Right lobe of liver (tissue), 6 donors: ENCODE measurements at regions of chr7 and their contacts with region 1.

Region 1: DNA sequence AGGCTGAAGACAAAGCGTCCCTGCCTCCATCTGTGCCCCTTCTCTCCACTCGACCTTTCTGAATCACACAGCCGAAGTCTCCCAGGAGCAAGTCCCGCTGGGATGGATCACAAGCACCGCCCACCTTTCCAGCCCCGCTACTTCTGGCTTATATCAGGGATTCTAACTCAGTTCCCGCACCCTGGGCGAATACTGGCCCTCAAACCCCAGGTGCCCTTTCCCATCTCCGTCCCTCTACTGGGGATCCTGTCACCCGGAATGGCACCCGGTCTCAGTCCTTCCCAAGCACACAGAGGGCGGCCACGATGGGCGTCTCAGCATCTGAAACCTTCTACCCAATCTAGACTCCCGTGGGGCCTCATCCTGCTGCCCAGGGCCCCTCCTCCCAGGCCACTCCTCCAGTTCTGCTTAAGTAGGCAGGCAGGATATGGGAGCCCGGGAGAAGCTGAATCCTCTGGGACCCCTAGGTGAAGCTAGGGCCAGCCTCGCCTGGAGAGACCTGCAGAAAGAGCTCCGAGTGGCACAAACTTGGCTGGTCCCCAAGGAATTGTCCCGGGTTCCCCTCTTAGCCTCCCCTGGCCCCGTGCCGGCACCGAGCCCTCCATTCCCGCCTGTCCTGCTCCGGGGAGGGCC is 768 bp downstream of the KCP start:
- DNase-seq: peak in 1 of 3 donors; percentile 22
- ATAC-seq: peak; percentile 6 to 28 (median 16)
- H3K4me3 ChIP-seq: peak overlapping the region in 1 of 3 donors; percentile 9
- H3K27ac ChIP-seq: no peak overlapping the region
- H3K4me1 ChIP-seq: peaks cover 0 to 4% (median 0%) of the 10 kb centered on the region in 4 donors
- H3K27me3 ChIP-seq: no peaks in the 10 kb centered on the region
- CTCF ChIP-seq: no peak
- POLR2A ChIP-seq: no peak

Region 2: DNA sequence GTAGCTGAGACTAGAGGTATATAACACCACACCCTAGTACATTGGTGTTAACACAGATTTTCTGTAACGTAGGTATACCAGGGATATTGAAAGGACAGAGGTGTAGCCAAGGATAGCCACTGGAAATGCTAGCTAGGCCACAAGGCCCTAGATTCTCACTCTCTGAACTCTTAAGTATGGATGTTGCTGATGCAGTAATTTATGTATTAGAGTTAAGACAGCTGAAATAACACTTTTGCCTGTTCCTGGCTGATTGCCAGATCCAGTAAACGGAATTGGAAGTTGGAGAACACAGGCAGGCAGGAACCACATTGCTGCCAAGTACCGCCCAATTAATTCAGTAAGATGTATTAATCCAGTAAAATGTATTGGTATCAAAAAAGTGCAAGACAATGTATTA is 168.7 kb before region 1 on chr7:
- intact Hi-C with region 1: no loop called
- DNase-seq: no peak
- ATAC-seq: no peak
- H3K4me3 ChIP-seq: no peak overlapping the region
- H3K27ac ChIP-seq: no peak overlapping the region
- H3K4me1 ChIP-seq: peaks cover 0 to 38% (median 7%) of the 10 kb centered on the region in 4 donors
- H3K27me3 ChIP-seq: no peaks in the 10 kb centered on the region
- CTCF ChIP-seq: no peak
- POLR2A ChIP-seq: no peak

Region 3: DNA sequence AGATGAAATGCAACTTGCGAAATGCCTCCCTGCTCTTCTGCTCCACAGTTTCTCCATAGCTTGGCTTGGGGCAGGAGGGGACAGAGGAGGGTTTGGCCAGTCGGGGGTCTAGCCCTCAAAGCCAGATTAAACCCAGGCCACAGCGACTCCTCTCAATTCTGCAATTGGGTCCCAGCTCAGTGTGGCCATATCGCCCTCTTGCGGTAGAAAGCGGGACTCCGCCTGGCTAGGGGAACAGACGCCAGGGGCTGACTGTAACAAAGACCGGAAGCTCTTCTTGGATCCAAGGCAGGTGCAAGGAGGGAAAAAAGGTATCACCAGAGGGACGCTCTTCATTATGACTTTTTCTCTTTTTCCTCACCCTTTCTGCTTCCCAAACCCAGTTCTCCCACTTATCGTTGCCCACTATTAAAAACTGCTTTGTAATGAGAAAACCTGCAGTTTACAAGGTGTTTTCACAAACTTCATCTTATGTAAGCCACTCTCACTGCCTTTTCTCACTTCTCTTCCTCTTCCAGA is 181.8 kb after region 1 on chr7:
- intact Hi-C with region 1: loop called in 1 of 2 experiments (anchors 5 kb)
- DNase-seq: peak; percentile 79 to 85 (median 85)
- ATAC-seq: peak; percentile 96 to 98 (median 97)
- H3K4me3 ChIP-seq: no peak overlapping the region
- H3K27ac ChIP-seq: no peak overlapping the region
- H3K4me1 ChIP-seq: peaks cover 0 to 15% (median 7%) of the 10 kb centered on the region in 4 donors
- H3K27me3 ChIP-seq: no peaks in the 10 kb centered on the region
- CTCF ChIP-seq: peak; percentile 95 to 98 (median 98)
- POLR2A ChIP-seq: no peak